Stomach (tissue), 19 donors: ENCODE measurements at regions of chr1 and their contacts with region 1.

Region 1: DNA sequence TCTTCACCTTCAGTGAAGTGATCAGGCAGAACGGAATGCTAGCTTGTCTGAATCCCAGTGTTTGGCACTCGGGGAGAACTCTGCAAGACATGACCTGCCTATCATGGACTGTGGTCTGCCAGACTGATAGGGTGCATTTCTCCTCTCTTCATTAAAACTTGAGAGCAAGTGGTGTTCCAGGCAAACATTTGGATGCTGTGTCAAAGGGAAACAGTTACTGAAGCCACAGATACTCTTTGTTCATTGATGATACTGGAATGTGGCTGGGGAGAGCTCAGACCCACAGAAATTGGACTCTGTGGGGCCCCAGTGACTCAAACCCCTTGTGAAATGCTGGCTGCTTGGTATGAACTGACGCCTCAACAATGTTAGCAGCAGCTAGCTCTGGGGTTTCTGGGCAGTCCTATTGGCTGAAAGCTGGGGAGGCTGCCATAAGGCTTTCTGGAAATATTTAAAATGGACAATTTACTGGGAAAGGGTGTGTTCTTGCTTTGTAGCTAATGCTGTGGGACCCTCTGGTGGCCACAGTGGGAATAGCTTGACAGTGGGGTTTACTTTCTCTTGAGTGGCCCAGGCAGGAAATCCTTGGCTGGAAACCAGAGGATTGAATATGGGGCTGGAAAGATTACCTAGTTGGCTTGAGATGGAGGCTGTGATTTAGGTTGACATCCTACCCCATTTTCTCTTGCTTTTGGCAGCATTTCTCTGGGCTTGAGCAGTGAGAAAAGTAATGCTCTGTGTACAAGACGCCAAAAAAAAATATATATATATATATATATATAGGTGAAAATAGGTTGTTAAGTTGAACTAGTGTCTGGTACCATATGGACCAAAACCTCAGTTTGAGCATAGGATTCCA is 8.0 kb upstream of the S100A10 start:
- DNase-seq: peak; percentile 94 to 95
- H3K4me3 ChIP-seq: no peak overlapping the region
- H3K27ac ChIP-seq: peak overlapping the region in 3 of 5 donors; percentile 40 to 70 (median 41)
- H3K4me1 ChIP-seq: peaks cover 0 to 21% (median 4%) of the 10 kb centered on the region in 4 donors
- H3K27me3 ChIP-seq: no peaks in the 10 kb centered on the region
- CTCF ChIP-seq: peak in 5 of 7 experiments; percentile 83 to 96 (median 92)
- EP300 ChIP-seq: no peak
- POLR2A ChIP-seq: no peak

Region 2: DNA sequence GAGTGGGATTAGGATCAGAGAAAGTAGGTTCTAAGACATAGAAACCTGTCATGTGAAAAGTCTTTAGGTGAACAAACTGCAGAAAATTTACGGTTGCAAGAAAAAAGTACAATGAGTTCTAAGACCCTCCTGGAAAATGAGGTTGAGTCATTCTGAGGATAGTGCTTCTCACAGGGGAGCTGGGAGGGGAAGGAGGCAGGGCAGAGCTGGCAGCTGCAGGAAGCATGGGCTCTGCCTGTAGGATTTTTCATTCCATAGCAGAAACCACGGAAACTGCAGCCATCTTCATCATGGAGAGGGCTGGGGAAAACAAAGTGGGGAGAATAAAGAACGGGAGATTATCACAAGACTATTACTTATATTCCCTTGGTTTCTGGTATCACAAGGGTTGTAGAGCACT is 66.5 kb before region 1 on chr1:
- intact Hi-C with region 1: loop called (anchors 5 kb)
- DNase-seq: no peak
- H3K4me3 ChIP-seq: no peak overlapping the region
- H3K27ac ChIP-seq: no peak overlapping the region
- H3K4me1 ChIP-seq: peaks cover 0 to 6% (median 0%) of the 10 kb centered on the region in 4 donors
- H3K27me3 ChIP-seq: no peaks in the 10 kb centered on the region
- CTCF ChIP-seq: no peak
- EP300 ChIP-seq: no peak
- POLR2A ChIP-seq: no peak